Activated CD4-positive, alpha-beta T cell treated with anti-CD3 and anti-CD28 coated beads, Interleukin-2, amount 10 ng/mL, durations not matched to agents 7 days and 5 days (primary cell): ENCODE measurements at regions of chr11 and their contacts with region 1.

Region 1: GRCh38 chr11:111739299-111739698 is 26.9 kb downstream of the PPP2R1B start:
- DNase-seq: no peak
- H3K4me3 Mint-ChIP-seq: no peak overlapping the region
- H3K27ac Mint-ChIP-seq: no peak overlapping the region
- H3K4me1 Mint-ChIP-seq: peaks cover 5% of the 10 kb centered on the region
- H3K27me3 Mint-ChIP-seq: no peaks in the 10 kb centered on the region

Region 2: GRCh38 chr11:111727431-111727830 is 11.9 kb before region 1 on chr11:
- CTCF ChIA-PET with region 1: interaction called, 3 read pairs
- POLR2A ChIA-PET with region 1: interaction called, 10 read pairs
- DNase-seq: no peak
- H3K4me3 Mint-ChIP-seq: no peak overlapping the region
- H3K27ac Mint-ChIP-seq: no peak overlapping the region
- H3K4me1 Mint-ChIP-seq: no peaks in the 10 kb centered on the region
- H3K27me3 Mint-ChIP-seq: no peaks in the 10 kb centered on the region

Region 3: GRCh38 chr11:111814557-111815320 is 75.4 kb after region 1 on chr11:
- CTCF ChIA-PET with region 1: no interaction called
- POLR2A ChIA-PET with region 1: no interaction called
- DNase-seq: no peak
- H3K4me3 Mint-ChIP-seq: no peak overlapping the region
- H3K27ac Mint-ChIP-seq: no peak overlapping the region
- H3K4me1 Mint-ChIP-seq: no peaks in the 10 kb centered on the region
- H3K27me3 Mint-ChIP-seq: no peaks in the 10 kb centered on the region